IMR-90 (cell line): ENCODE measurements at regions of chr13 and their contacts with region 1.

Region 1: DNA sequence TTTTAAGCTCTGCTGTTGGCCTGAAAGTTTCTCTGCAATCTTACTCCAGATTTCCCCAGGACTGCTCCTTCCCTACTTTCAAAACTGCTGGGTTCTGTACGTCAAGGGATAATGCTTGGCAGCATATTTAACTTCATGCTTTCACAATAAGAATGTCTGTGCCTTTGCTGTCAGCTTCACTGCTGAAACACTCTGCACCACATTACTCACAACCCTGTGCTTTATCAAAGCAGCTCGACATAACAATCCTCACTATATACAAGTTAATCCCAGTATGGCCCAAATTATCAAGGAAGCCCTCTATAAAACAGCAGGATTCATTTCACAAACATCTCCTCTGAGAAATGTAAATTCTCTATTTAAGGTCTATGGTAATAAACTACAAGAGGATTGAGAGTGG is 17.5 kb downstream of the LATS2 start:
- DNase-seq: peak; percentile 96
- ATAC-seq: peak; percentile 91
- H3K4me3 ChIP-seq: no peak overlapping the region
- H3K27ac ChIP-seq: peak overlapping the region; percentile 12; the same call in 1 of the 2 replicates
- H3K4me1 ChIP-seq: peaks cover 38% of the 10 kb centered on the region
- H3K27me3 ChIP-seq: no peaks in the 10 kb centered on the region
- CTCF ChIP-seq: no peak
- POLR2A ChIP-seq: no peak
- RAD21 ChIP-seq: no peak; the same call in 1 of the 2 replicates

Region 2: DNA sequence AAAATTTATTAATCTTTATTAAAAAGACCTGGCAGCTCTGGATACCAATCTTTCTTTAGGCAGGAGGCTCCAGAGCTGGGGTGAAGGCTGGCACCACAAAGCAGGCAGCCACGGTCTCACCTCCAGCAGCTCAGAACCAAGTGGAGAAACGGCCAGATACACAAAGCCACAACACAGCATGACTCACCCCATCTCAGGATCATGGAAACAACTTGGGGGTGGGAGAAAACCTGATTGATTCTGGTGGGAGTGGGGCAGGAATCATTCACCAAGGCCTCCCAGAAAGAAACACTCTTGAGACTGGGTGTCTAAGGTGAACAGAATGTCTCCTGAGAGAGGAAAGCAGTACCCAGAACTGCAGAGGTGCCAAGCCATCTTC is 582.4 kb before region 1 on chr13:
- CTCF ChIA-PET with region 1: no interaction called
- POLR2A ChIA-PET with region 1: no interaction called
- dilution Hi-C with region 1: no loop called
- in situ Hi-C with region 1: no loop called
- intact Hi-C with region 1: no loop called
- DNase-seq: peak; percentile 49
- ATAC-seq: peak; percentile 63; the same call in 1 of the 2 replicates
- H3K4me3 ChIP-seq: no peak overlapping the region
- H3K27ac ChIP-seq: no peak overlapping the region
- H3K4me1 ChIP-seq: peaks cover 6% of the 10 kb centered on the region; the same call in 1 of the 2 replicates
- H3K27me3 ChIP-seq: no peaks in the 10 kb centered on the region
- CTCF ChIP-seq: no peak
- POLR2A ChIP-seq: no peak
- RAD21 ChIP-seq: no peak

Region 3: DNA sequence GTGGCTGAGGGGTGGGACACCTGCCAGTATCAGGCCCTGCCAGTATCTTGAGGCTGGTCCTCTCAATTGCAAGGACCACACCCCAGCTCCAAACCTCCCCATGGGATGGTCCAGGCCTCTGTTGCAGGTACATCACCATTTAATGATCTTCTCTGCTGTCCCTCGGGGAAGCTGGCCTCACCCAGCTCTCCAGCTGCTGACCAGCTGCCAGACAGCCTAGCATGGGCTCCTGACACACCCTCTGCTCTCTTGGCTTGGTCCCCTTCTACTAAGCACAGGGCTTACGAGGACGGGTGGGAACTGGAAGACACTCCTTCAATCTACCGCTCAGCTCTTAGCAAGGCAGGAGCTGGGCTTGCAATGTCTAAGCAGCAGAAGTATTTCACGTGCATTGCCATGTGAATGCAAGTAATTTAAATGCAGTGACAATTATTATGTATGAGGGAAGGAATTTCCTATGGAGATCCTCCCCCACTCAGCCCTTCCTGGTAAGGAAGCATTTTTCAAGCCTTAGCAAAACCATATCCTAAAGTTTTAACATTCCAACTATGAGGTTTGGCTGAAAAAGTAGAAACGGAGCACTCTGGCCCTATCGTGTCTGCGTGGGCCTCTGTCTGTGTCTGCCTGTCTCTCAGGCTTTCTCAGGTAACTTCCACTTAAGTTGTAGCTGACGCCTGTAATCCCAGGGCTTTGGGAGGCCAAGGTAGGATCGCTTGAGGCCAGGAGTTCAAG is 46.3 kb before region 1 on chr13:
- CTCF ChIA-PET with region 1: no interaction called
- POLR2A ChIA-PET with region 1: no interaction called
- dilution Hi-C with region 1: no loop called
- in situ Hi-C with region 1: no loop called
- intact Hi-C with region 1: loop called (anchors 5 kb)
- DNase-seq: peak; percentile 98
- ATAC-seq: peak; percentile 87
- H3K4me3 ChIP-seq: no peak overlapping the region
- H3K27ac ChIP-seq: peak overlapping the region; percentile 92
- H3K4me1 ChIP-seq: peaks cover 24% of the 10 kb centered on the region
- H3K27me3 ChIP-seq: no peaks in the 10 kb centered on the region
- CTCF ChIP-seq: no peak
- POLR2A ChIP-seq: no peak
- RAD21 ChIP-seq: peak; percentile 22; the same call in 1 of the 2 replicates

Region 4: GRCh38 chr13:21130116-21130515 is 86.2 kb after region 1 on chr13:
- CTCF ChIA-PET with region 1: no interaction called
- POLR2A ChIA-PET with region 1: no interaction called
- dilution Hi-C with region 1: no loop called
- in situ Hi-C with region 1: no loop called
- intact Hi-C with region 1: loop called (anchors 5 kb)
- DNase-seq: no peak
- ATAC-seq: no peak
- H3K4me3 ChIP-seq: no peak overlapping the region
- H3K27ac ChIP-seq: no peak overlapping the region
- H3K4me1 ChIP-seq: peaks cover 1% of the 10 kb centered on the region; the same call in 1 of the 2 replicates
- H3K27me3 ChIP-seq: no peaks in the 10 kb centered on the region
- CTCF ChIP-seq: no peak
- POLR2A ChIP-seq: no peak
- RAD21 ChIP-seq: no peak

Region 5: DNA sequence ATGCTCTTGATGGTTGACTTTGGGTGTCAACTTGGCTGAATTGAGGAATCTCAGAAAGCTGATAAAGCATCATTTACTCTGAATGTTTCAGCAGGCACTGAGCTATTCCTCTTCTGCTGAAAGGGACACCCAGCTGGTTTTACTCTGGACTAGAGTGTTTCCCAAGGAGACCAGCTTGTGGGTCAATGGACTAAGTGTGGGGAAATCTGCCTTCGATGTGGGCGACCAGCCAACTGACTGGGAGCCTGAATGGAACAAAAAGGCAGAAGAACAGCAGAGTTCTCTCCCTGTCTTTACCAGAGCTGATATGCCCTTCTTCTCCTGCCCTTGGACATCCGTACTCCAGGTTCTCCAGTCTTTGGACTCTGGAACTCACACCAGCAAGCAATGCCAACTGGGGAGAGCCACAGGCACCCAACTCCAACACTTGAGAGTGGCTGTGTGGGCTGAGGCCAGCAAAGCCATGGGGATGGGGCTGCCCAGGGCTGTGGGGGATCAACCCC is 164.8 kb after region 1 on chr13:
- CTCF ChIA-PET with region 1: no interaction called
- POLR2A ChIA-PET with region 1: no interaction called
- dilution Hi-C with region 1: no loop called
- in situ Hi-C with region 1: no loop called
- intact Hi-C with region 1: no loop called
- DNase-seq: no peak
- ATAC-seq: no peak
- H3K4me3 ChIP-seq: no peak overlapping the region
- H3K27ac ChIP-seq: no peak overlapping the region
- H3K4me1 ChIP-seq: no peaks in the 10 kb centered on the region
- H3K27me3 ChIP-seq: peaks cover 10% of the 10 kb centered on the region
- CTCF ChIP-seq: no peak
- POLR2A ChIP-seq: no peak
- RAD21 ChIP-seq: no peak